T-cell (primary cell): ENCODE measurements at regions of chr18 and their contacts with region 1.

Region 1: GRCh38 chr18:12155996-12156395 is 62.4 kb downstream of the ANKRD62 start:
- DNase-seq: no peak
- ATAC-seq: no peak
- H3K4me3 ChIP-seq: no peak overlapping the region
- H3K4me3 Mint-ChIP-seq: no peak overlapping the region
- H3K27ac ChIP-seq: no peak overlapping the region
- H3K27ac Mint-ChIP-seq: no peak overlapping the region
- H3K4me1 ChIP-seq: no peaks in the 10 kb centered on the region
- H3K4me1 Mint-ChIP-seq: no peaks in the 10 kb centered on the region
- H3K27me3 ChIP-seq: no peaks in the 10 kb centered on the region
- H3K27me3 Mint-ChIP-seq: no peaks in the 10 kb centered on the region

Region 2: GRCh38 chr18:11316546-11316945 is 839.5 kb before region 1 on chr18:
- CTCF ChIA-PET with region 1: no interaction called
- POLR2A ChIA-PET with region 1: interaction called in 1 of 2 experiments, 10 read pairs
- DNase-seq: no peak
- ATAC-seq: no peak
- H3K4me3 ChIP-seq: no peak overlapping the region
- H3K4me3 Mint-ChIP-seq: no peak overlapping the region
- H3K27ac ChIP-seq: no peak overlapping the region
- H3K27ac Mint-ChIP-seq: no peak overlapping the region
- H3K4me1 ChIP-seq: no peaks in the 10 kb centered on the region
- H3K4me1 Mint-ChIP-seq: no peaks in the 10 kb centered on the region
- H3K27me3 ChIP-seq: no peaks in the 10 kb centered on the region
- H3K27me3 Mint-ChIP-seq: peaks cover 0 to 4% of the 10 kb centered on the region in 2 donors